ENCODE measurements at regions of chr19 and their contacts with region 1.

Region 1: GRCh38 chr19:34772697-34773554 is at the start of gene ZNF599:
- DNase-seq: peak; percentile 94
- H3K4me3 Mint-ChIP-seq: peak within 1 kb of the TSS; percentile 81
- H3K27ac Mint-ChIP-seq: no peak within 1 kb of the TSS
- H3K4me1 Mint-ChIP-seq: peaks cover 11% of the 10 kb centered on the region
- H3K27me3 Mint-ChIP-seq: no peaks in the 10 kb centered on the region
- CTCF ChIP-seq: no peak
- total RNA-seq, gene ZNF599: 4.9 and 6.2 TPM in 2 replicates

Region 2: GRCh38 chr19:34712395-34713261 is 60.3 kb before region 1 on chr19:
- CTCF ChIA-PET with region 1: no interaction called
- intact Hi-C with region 1: no loop called
- DNase-seq: peak; percentile 68
- H3K4me3 Mint-ChIP-seq: no peak overlapping the region
- H3K27ac Mint-ChIP-seq: no peak overlapping the region
- H3K4me1 Mint-ChIP-seq: no peaks in the 10 kb centered on the region
- H3K27me3 Mint-ChIP-seq: no peaks in the 10 kb centered on the region
- CTCF ChIP-seq: peak; percentile 77

Region 3: DNA sequence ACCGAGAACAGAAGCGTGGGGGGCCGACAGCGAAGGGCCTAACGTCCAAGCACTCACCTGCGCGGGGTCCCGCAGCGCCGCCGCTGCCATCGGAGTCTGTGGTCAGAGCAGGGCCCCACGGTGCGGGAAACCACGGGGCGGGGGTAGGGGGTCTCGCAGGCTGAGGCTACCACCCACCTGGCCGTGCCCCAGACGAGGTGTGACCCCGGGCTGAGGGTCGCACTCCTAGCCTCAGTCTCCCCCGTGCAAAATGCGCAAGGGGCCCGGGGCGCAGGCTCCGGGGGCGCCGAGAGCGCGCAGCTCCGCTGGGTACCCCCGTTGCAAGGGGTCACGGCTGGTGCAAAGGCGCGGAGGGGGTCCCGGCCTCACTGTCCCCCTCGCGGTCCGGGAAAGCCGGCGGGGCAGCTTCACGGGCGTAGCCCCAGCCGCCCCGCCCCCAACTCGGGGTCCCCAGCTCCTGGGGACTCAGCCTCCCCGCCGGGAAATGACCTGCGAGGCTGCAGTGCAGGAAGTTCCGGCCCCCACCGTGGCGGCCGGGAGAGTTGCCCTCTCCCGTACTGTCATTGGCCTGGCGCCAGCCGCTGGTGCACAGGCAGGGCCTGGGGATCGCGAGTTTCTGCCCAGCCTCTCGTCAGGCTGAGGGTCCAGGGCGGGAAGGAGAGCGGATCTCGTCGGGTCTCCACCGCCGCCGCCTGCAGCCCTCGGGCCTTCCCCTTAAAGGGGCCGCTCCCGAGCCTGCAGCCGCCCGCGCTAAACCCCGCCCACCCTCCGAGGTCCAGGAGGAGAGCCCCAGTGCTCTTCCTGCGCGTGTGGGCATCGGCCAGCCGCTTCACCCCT is 190.9 kb after region 1 on chr19 and contains the start of gene ZNF792:
- CTCF ChIA-PET with region 1: no interaction called
- intact Hi-C with region 1: loop called (anchors 10 kb)
- DNase-seq: peak; percentile 79
- H3K4me3 Mint-ChIP-seq: peak within 1 kb of the TSS; percentile 76
- H3K27ac Mint-ChIP-seq: peak within 1 kb of the TSS; percentile 0
- H3K4me1 Mint-ChIP-seq: peaks cover 29% of the 10 kb centered on the region
- H3K27me3 Mint-ChIP-seq: no peaks in the 10 kb centered on the region
- CTCF ChIP-seq: no peak
- total RNA-seq, gene ZNF792: 9.1 and 9.3 TPM in 2 replicates